Heart right ventricle (tissue), 16 donors: ENCODE measurements at regions of chr9 and their contacts with region 1.

Region 1: DNA sequence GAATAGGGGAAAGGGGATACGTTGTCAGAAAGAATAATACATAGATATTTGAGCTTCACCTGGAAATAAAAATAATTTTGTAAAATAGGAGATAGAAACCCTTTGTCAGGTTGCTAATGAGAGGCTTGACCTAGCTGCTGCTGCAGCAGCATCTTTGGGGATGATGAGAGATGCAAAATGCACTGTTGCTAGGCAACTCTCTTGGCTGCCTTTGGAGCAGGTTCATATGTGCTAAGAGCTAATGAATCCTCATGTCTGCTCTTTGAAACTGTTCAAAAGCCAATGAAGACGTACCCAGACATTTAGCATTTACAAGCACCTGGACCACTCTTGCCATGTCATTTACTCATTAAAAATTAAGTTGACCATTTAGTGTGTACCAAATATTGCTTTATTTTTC is 121.7 kb downstream of the FOCAD start:
- DNase-seq: no peak
- ATAC-seq: no peak
- H3K4me3 ChIP-seq: no peak overlapping the region
- H3K27ac ChIP-seq: no peak overlapping the region
- H3K4me1 ChIP-seq: no peaks in the 10 kb centered on the region
- H3K27me3 ChIP-seq: no peaks in the 10 kb centered on the region
- CTCF ChIP-seq: no peak

Region 2: GRCh38 chr9:20744036-20744630 is 61.6 kb before region 1 on chr9:
- intact Hi-C with region 1: no loop called
- DNase-seq: no peak
- ATAC-seq: no peak
- H3K4me3 ChIP-seq: no peak overlapping the region
- H3K27ac ChIP-seq: no peak overlapping the region
- H3K4me1 ChIP-seq: peaks cover 0 to 9% (median 0%) of the 10 kb centered on the region in 9 donors
- H3K27me3 ChIP-seq: no peaks in the 10 kb centered on the region
- CTCF ChIP-seq: no peak

Region 3: DNA sequence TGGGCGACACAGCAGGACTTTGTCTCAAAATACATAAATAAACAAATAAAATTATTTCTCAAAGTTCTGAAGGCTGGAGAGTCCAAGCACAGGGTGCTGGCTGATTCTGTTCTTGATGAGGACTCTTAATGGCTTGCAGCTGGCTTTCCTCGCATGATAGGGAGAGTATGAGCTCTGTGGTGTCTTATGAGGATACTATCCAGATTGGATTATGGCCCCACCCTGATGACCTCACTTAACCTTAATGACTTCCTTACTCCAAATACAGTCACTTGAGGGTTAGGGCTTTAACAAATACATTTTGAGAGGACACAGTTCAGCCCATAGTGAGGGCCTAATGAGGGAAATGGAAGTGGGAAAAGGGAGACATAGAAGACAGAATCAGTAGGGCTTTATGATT is 34.0 kb before region 1 on chr9:
- intact Hi-C with region 1: no loop called
- DNase-seq: no peak
- ATAC-seq: no peak
- H3K4me3 ChIP-seq: no peak overlapping the region
- H3K27ac ChIP-seq: no peak overlapping the region
- H3K4me1 ChIP-seq: peaks cover 0 to 9% (median 0%) of the 10 kb centered on the region in 9 donors
- H3K27me3 ChIP-seq: no peaks in the 10 kb centered on the region
- CTCF ChIP-seq: no peak

Region 4: DNA sequence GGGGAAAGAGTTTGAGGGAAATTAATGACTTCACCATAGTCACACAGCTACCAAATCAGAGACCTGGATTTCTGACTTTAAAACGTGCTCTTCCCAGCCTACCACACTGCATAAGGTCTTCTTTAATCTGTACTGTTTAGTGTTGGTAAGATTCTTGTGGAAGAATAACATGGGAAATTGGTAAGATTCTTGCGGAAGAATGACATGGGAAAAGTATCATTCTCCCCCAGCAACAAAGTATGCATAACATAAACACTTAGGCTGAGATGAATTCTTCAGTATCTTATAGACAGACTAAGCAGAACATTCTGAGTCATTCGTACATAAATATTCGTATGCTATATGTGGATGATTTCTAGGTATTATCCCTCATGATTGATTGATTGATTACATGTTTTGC is 48.7 kb after region 1 on chr9:
- intact Hi-C with region 1: loop called in 2 of 10 experiments (anchors 5 to 10 kb)
- DNase-seq: no peak
- ATAC-seq: no peak
- H3K4me3 ChIP-seq: no peak overlapping the region
- H3K27ac ChIP-seq: no peak overlapping the region
- H3K4me1 ChIP-seq: no peaks in the 10 kb centered on the region
- H3K27me3 ChIP-seq: no peaks in the 10 kb centered on the region
- CTCF ChIP-seq: no peak